ENCODE measurements at regions of chr17 and their contacts with region 1.

Region 1: GRCh38 chr17:9729034-9729650 is 62.2 kb downstream of the DHRS7C start:
- DNase-seq: no peak
- ATAC-seq: peak in 7 of 8 donors; percentile 25 to 62 (median 56)
- H3K4me3 ChIP-seq: no peak overlapping the region
- H3K27ac ChIP-seq: no peak overlapping the region
- H3K4me1 ChIP-seq: no peaks in the 10 kb centered on the region
- H3K27me3 ChIP-seq: peaks cover 0 to 41% (median 25%) of the 10 kb centered on the region in 7 donors
- CTCF ChIP-seq: peak; percentile 81 to 97 (median 93)

Region 2: GRCh38 chr17:9768381-9768934 is 39.3 kb after region 1 on chr17:
- intact Hi-C with region 1: loop called in 5 of 10 experiments (anchors 1 to 5 kb)
- DNase-seq: no peak
- ATAC-seq: no peak
- H3K4me3 ChIP-seq: no peak overlapping the region
- H3K27ac ChIP-seq: no peak overlapping the region
- H3K4me1 ChIP-seq: peaks cover 0 to 19% (median 0%) of the 10 kb centered on the region in 9 donors
- H3K27me3 ChIP-seq: peaks cover 0 to 44% (median 24%) of the 10 kb centered on the region in 7 donors
- CTCF ChIP-seq: peak; percentile 41 to 78 (median 64)

Region 3: DNA sequence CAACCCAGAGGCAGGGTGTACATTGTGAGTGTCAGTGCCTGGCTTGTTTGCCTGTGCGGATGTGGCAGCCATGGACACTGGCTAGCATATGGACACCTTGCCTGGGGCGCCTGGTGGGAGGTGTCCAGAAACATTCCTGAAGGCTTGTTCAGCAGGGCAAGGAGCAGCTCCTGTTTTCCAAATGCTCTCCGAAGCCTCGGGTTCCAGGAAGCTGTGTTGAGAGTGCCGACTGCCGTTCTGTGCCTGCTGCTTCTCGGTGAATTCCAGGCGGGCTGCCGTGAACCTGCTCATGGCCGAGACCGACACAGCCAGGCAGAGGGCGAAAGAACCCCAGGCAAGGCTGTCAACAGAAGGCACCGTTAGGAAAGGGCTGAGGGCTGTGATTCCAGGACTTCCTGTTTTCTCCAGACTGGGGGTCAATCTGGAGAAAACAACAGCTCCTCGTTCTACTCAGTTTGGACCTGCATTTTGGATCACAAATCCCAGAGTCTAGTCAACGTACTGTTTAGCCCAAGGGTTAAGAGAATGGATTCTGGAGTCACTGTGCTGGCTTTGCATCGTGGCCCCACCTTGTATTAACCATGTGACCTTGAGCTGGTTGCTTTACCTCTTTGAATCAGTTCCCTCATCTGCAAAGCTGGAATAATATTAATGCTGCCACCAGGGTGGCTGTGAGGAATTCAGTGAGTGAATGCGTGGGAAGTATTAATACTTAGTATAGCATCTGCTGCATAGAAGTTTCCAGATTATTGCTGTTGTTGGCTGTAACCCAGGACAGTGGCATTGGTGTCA is 73.4 kb after region 1 on chr17:
- intact Hi-C with region 1: no loop called
- DNase-seq: no peak
- ATAC-seq: peak; percentile 20 to 76 (median 58)
- H3K4me3 ChIP-seq: no peak overlapping the region
- H3K27ac ChIP-seq: peak overlapping the region in 1 of 10 donors; percentile 58
- H3K4me1 ChIP-seq: peaks cover 0 to 5% (median 0%) of the 10 kb centered on the region in 9 donors
- H3K27me3 ChIP-seq: peaks cover 0 to 62% (median 42%) of the 10 kb centered on the region in 7 donors
- CTCF ChIP-seq: peak in 3 of 9 donors; percentile 20 to 24 (median 20)

Region 4: GRCh38 chr17:9880582-9880999 is 151.4 kb after region 1 on chr17:
- intact Hi-C with region 1: loop called in 5 of 10 experiments (anchors 10 kb)
- DNase-seq: no peak
- ATAC-seq: peak in 3 of 8 donors; percentile 39 to 98 (median 73)
- H3K4me3 ChIP-seq: no peak overlapping the region
- H3K27ac ChIP-seq: no peak overlapping the region
- H3K4me1 ChIP-seq: peaks cover 0 to 17% (median 0%) of the 10 kb centered on the region in 9 donors
- H3K27me3 ChIP-seq: peaks cover 0 to 4% (median 0%) of the 10 kb centered on the region in 7 donors
- CTCF ChIP-seq: no peak

Region 5: GRCh38 chr17:9890124-9890523 is 161.0 kb after region 1 on chr17:
- intact Hi-C with region 1: loop called in 8 of 10 experiments (anchors 5 to 10 kb)
- DNase-seq: peak in 1 of 2 donors; percentile 36
- ATAC-seq: peak in 3 of 8 donors; percentile 38 to 66 (median 53)
- H3K4me3 ChIP-seq: no peak overlapping the region
- H3K27ac ChIP-seq: no peak overlapping the region
- H3K4me1 ChIP-seq: no peaks in the 10 kb centered on the region
- H3K27me3 ChIP-seq: peaks cover 0 to 25% (median 2%) of the 10 kb centered on the region in 7 donors
- CTCF ChIP-seq: peak; percentile 27 to 65 (median 57)